ENCODE measurements at regions of chr15 and their contacts with region 1.

Region 1: GRCh38 chr15:100341662-100342560 is at the start of gene ADAMTS17:
- DNase-seq: peak; percentile 95
- H3K4me3 ChIP-seq: peak within 1 kb of the TSS; percentile 82
- H3K27ac ChIP-seq: peak within 1 kb of the TSS; percentile 63
- H3K4me1 ChIP-seq: peaks cover 5% of the 10 kb centered on the region
- H3K27me3 ChIP-seq: peaks cover 32% of the 10 kb centered on the region
- CTCF ChIP-seq: peak; percentile 97
- total RNA-seq, gene ADAMTS17: 0.99 TPM

Region 2: GRCh38 chr15:99928429-99928981 is 413.4 kb before region 1 on chr15:
- intact Hi-C with region 1: loop called (anchors 2 kb)
- DNase-seq: peak; percentile 87
- H3K4me3 ChIP-seq: peak overlapping the region; percentile 65
- H3K27ac ChIP-seq: peak overlapping the region; percentile 74
- H3K4me1 ChIP-seq: peaks cover 12% of the 10 kb centered on the region
- H3K27me3 ChIP-seq: peaks cover 2% of the 10 kb centered on the region
- CTCF ChIP-seq: peak; percentile 74

Region 3: GRCh38 chr15:100284701-100285100 is 57.2 kb before region 1 on chr15:
- intact Hi-C with region 1: no loop called
- DNase-seq: peak; percentile 82
- H3K4me3 ChIP-seq: no peak overlapping the region
- H3K27ac ChIP-seq: no peak overlapping the region
- H3K4me1 ChIP-seq: peaks cover 14% of the 10 kb centered on the region
- H3K27me3 ChIP-seq: no peaks in the 10 kb centered on the region
- CTCF ChIP-seq: no peak

Region 4: GRCh38 chr15:100373120-100373896 is 31.4 kb after region 1 on chr15:
- intact Hi-C with region 1: no loop called
- DNase-seq: no peak
- H3K4me3 ChIP-seq: peak overlapping the region; percentile 56
- H3K27ac ChIP-seq: no peak overlapping the region
- H3K4me1 ChIP-seq: peaks cover 6% of the 10 kb centered on the region
- H3K27me3 ChIP-seq: peaks cover 51% of the 10 kb centered on the region
- CTCF ChIP-seq: no peak

Measured in left ventricle myocardium inferior (tissue), 1 donor.